CD8-positive, alpha-beta T cell (primary cell): ENCODE measurements at regions of chr2 and their contacts with region 1.

Region 1: DNA sequence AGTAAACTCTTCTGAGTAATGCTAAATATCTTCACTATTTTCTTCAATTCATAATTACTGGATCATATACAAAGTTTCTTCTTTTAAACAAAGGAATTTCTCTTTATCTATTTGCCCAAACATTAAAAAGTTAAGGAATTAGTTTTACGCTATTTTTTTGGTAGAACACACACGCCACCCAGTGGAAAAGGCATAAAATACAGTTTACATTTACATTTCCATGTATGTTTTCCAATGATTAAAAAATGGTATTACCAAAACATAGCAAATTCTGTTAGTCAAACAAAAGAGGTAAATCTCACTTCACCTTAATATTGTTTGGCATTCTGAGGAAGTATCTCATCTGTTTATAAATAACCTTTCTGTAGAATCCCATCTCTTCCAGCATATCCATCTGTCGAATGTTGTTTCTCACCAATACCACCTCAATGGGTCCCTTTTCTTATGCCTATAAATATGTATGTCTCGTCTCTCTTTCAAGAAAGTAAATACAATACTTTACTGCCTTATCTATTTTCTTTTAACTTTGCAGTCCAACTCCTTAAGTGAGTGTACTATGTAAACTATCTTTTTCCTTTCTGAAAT is 7.2 kb downstream of the BOLL start:
- DNase-seq: peak in 3 of 9 experiments; percentile 38 to 58 (median 48)
- ATAC-seq: no peak
- H3K4me3 ChIP-seq: no peak overlapping the region
- H3K4me3 Mint-ChIP-seq: no peak overlapping the region
- H3K27ac ChIP-seq: no peak overlapping the region
- H3K27ac Mint-ChIP-seq: no peak overlapping the region
- H3K4me1 ChIP-seq: no peaks in the 10 kb centered on the region
- H3K4me1 Mint-ChIP-seq: no peaks in the 10 kb centered on the region
- H3K27me3 ChIP-seq: no peaks in the 10 kb centered on the region
- H3K27me3 Mint-ChIP-seq: no peaks in the 10 kb centered on the region
- CTCF ChIP-seq: peak; percentile 97

Region 2: DNA sequence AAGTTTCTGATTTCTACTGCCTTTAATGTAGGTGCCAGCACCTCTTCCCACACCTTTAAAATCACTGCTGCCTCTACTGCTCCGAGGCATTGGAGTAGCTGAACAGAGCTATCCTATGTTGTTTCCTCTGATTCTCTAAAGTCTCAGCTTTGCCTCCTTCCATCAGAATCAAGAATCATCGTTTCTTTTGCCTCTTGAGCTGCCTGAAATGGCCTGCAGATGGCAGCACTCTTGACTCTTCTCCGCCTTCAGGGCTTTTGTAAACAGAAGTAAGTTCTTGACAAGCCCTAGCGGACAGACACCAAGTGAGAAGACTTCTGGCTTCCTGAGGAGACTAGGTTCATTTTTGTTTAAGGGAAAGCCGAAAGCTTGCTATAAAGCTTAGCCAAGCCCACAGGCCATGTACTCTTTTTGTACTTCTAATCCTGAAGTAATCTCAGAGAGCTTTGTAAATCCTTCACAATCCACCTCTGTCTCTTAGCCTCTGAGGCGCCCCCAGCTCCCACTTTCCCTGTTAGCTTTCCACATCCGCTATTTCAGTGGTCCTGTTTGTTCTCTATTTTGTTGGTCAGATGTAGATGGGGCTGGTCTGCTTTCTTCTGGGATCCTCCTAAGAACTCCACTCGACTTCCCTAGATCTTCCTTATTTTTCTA is 1026.8 kb before region 1 on chr2:
- CTCF ChIA-PET with region 1: no interaction called
- POLR2A ChIA-PET with region 1: no interaction called
- intact Hi-C with region 1: loop called in 1 of 2 experiments (anchors 2 kb)
- DNase-seq: peak; percentile 30 to 73 (median 54)
- ATAC-seq: peak; percentile 93
- H3K4me3 ChIP-seq: no peak overlapping the region
- H3K4me3 Mint-ChIP-seq: no peak overlapping the region
- H3K27ac ChIP-seq: no peak overlapping the region
- H3K27ac Mint-ChIP-seq: peak overlapping the region; percentile 14
- H3K4me1 ChIP-seq: peaks cover 3% of the 10 kb centered on the region
- H3K4me1 Mint-ChIP-seq: peaks cover 11% of the 10 kb centered on the region
- H3K27me3 ChIP-seq: no peaks in the 10 kb centered on the region
- H3K27me3 Mint-ChIP-seq: no peaks in the 10 kb centered on the region
- CTCF ChIP-seq: peak; percentile 67

Region 3: GRCh38 chr2:197097578-197098366 is 680.1 kb before region 1 on chr2:
- CTCF ChIA-PET with region 1: no interaction called
- POLR2A ChIA-PET with region 1: no interaction called
- intact Hi-C with region 1: loop called in 1 of 2 experiments (anchors 5 kb)
- DNase-seq: no peak
- ATAC-seq: no peak
- H3K4me3 ChIP-seq: no peak overlapping the region
- H3K4me3 Mint-ChIP-seq: no peak overlapping the region
- H3K27ac ChIP-seq: no peak overlapping the region
- H3K27ac Mint-ChIP-seq: peak overlapping the region; percentile 73
- H3K4me1 ChIP-seq: no peaks in the 10 kb centered on the region
- H3K4me1 Mint-ChIP-seq: peaks cover 32% of the 10 kb centered on the region
- H3K27me3 ChIP-seq: no peaks in the 10 kb centered on the region
- H3K27me3 Mint-ChIP-seq: no peaks in the 10 kb centered on the region
- CTCF ChIP-seq: no peak

Region 4: DNA sequence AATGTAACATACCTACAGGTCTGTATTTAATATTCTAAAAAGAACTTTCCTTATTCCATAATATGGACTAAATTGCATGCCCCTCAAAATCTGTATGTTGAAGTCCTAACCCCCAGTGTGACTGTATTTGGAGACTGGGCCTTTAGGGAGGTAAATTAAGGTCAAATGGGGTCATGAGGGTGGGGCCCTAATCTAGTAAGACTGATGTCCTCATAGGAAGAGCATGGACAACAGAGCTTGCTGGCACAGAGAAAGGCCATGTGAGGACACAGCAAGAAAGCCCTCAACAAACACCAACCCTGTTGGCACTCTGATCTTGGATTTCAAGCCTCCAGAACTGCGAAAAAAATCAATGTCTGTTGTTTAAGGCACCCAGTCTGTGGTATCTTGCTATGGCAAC is 361.6 kb before region 1 on chr2:
- CTCF ChIA-PET with region 1: no interaction called
- POLR2A ChIA-PET with region 1: no interaction called
- intact Hi-C with region 1: loop called in 1 of 2 experiments (anchors 5 kb)
- DNase-seq: no peak
- ATAC-seq: no peak
- H3K4me3 ChIP-seq: no peak overlapping the region
- H3K4me3 Mint-ChIP-seq: no peak overlapping the region
- H3K27ac ChIP-seq: no peak overlapping the region
- H3K27ac Mint-ChIP-seq: no peak overlapping the region
- H3K4me1 ChIP-seq: no peaks in the 10 kb centered on the region
- H3K4me1 Mint-ChIP-seq: peaks cover 21% of the 10 kb centered on the region
- H3K27me3 ChIP-seq: no peaks in the 10 kb centered on the region
- H3K27me3 Mint-ChIP-seq: no peaks in the 10 kb centered on the region
- CTCF ChIP-seq: no peak

Region 5: DNA sequence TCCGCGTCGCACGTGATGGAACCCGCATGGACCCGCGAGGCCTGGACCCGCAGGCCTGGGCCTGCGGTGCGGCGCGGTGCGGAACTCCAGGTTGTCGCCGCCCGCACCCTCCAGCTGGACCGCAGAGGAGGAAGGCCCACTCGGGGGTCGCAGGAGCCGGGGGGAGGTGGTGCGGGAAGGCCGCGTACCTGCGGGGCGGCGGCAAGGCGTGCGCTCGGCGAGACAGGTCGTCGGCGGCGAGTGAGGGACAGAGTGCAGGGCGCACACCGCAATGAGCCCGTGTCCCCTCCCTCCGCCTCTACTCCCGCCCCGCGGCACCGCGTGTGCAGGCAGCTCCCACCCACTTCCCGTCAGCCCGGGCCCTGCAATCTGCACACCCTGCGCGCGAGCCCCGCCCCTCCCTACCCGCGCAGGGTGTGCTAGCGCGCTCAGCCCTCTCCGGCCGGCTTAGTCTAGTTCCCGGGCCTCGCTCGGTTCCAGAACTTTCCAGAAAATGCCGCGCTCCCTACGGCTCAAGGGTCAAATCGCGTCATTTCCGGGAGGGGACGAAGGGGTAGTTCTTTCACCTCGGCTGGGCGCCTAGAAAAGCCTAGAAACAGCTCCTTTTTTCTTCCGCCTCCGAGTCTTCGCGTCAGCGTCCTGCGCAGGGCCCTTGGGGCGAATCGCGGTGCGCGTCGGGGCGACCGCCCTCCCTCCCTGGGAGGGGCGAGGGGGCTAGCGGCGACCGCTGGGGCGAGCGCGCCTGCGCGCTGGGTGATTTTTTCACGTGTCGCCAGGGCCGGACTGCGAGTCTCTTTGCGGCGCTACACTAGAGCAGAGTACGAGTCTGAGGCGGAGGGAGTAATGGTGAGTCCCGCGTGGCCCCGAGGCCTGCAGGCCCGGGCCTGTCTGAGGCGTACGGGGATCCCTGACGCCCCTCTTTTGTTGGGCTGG is 278.1 kb before region 1 on chr2 and contains the starts of genes HSPD1 and HSPE1:
- CTCF ChIA-PET with region 1: interaction called, 3 read pairs
- POLR2A ChIA-PET with region 1: no interaction called
- intact Hi-C with region 1: loop called in 1 of 2 experiments (anchors 5 kb)
- DNase-seq: peak; percentile 93 to 99 (median 97)
- ATAC-seq: peak; percentile 86
- H3K4me3 ChIP-seq: peak within 1 kb of the TSS; percentile 61 to 76
- H3K4me3 Mint-ChIP-seq: peak within 1 kb of the TSS; percentile 92
- H3K27ac ChIP-seq: peak within 1 kb of the TSS; percentile 96
- H3K27ac Mint-ChIP-seq: peak within 1 kb of the TSS; percentile 97
- H3K4me1 ChIP-seq: peaks cover 55% of the 10 kb centered on the region
- H3K4me1 Mint-ChIP-seq: peaks cover 62% of the 10 kb centered on the region
- H3K27me3 ChIP-seq: no peaks in the 10 kb centered on the region
- H3K27me3 Mint-ChIP-seq: no peaks in the 10 kb centered on the region
- CTCF ChIP-seq: no peak
- total RNA-seq, gene HSPD1: 162 to 163 TPM
- total RNA-seq, gene HSPE1: 76.7 to 76.8 TPM

Region 6: GRCh38 chr2:197760293-197760657 is 17.6 kb before region 1 on chr2:
- CTCF ChIA-PET with region 1: no interaction called
- POLR2A ChIA-PET with region 1: no interaction called
- intact Hi-C with region 1: no loop called
- DNase-seq: no peak
- ATAC-seq: no peak
- H3K4me3 ChIP-seq: no peak overlapping the region
- H3K4me3 Mint-ChIP-seq: no peak overlapping the region
- H3K27ac ChIP-seq: no peak overlapping the region
- H3K27ac Mint-ChIP-seq: no peak overlapping the region
- H3K4me1 ChIP-seq: no peaks in the 10 kb centered on the region
- H3K4me1 Mint-ChIP-seq: no peaks in the 10 kb centered on the region
- H3K27me3 ChIP-seq: no peaks in the 10 kb centered on the region
- H3K27me3 Mint-ChIP-seq: peaks cover 9% of the 10 kb centered on the region
- CTCF ChIP-seq: no peak

Region 7: DNA sequence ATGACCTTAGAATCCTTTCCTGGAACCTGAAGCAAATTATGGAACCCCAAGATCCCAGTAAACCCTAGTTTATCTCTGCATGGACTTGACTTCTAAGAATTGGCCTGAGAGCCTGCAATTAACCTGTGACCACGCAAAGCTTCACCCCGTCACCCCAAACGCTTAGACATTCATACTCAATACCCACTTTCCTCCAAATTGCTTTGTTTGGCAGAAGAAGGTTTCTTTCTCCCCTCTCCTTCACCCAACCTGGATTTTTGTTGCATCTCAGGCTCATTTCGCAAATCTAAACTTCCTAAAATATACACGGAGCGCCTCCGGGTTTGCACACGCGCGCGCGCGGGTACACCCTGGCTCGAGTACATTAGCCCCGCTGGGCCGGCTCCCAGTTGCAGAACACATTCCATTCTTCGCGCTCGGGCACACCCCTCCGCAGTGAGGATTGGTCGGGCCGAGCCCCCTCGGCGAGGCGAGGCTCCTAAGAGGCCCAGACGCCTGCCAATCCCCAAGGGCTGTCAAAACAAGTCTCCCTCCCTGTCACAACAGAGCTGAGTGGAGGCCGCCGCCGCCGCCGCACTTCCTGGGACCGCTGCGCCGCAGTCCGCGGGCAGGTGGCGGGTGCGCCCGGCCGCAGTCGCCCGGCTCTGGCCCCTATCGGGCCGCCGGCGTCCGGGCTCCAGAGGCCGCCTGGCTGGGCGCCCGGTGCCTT is 26.3 kb after region 1 on chr2 and contains the start of gene PLCL1:
- CTCF ChIA-PET with region 1: no interaction called
- POLR2A ChIA-PET with region 1: no interaction called
- intact Hi-C with region 1: no loop called
- DNase-seq: peak; percentile 77 to 94 (median 88)
- ATAC-seq: peak; percentile 98
- H3K4me3 ChIP-seq: peak within 1 kb of the TSS; percentile 67 to 70
- H3K4me3 Mint-ChIP-seq: peak within 1 kb of the TSS; percentile 92
- H3K27ac ChIP-seq: peak within 1 kb of the TSS in 1 of 2 experiments; percentile 53
- H3K27ac Mint-ChIP-seq: peak within 1 kb of the TSS; percentile 89
- H3K4me1 ChIP-seq: peaks cover 44% of the 10 kb centered on the region
- H3K4me1 Mint-ChIP-seq: peaks cover 44% of the 10 kb centered on the region
- H3K27me3 ChIP-seq: no peaks in the 10 kb centered on the region
- H3K27me3 Mint-ChIP-seq: no peaks in the 10 kb centered on the region
- CTCF ChIP-seq: no peak
- total RNA-seq, gene PLCL1: 8.2 to 8.3 TPM

Region 8: GRCh38 chr2:197893403-197894177 is 115.7 kb after region 1 on chr2:
- CTCF ChIA-PET with region 1: no interaction called
- POLR2A ChIA-PET with region 1: no interaction called
- intact Hi-C with region 1: no loop called
- DNase-seq: no peak
- ATAC-seq: no peak
- H3K4me3 ChIP-seq: no peak overlapping the region
- H3K4me3 Mint-ChIP-seq: peak overlapping the region; percentile 9
- H3K27ac ChIP-seq: no peak overlapping the region
- H3K27ac Mint-ChIP-seq: peak overlapping the region; percentile 12
- H3K4me1 ChIP-seq: peaks cover 21% of the 10 kb centered on the region
- H3K4me1 Mint-ChIP-seq: peaks cover 44% of the 10 kb centered on the region
- H3K27me3 ChIP-seq: no peaks in the 10 kb centered on the region
- H3K27me3 Mint-ChIP-seq: no peaks in the 10 kb centered on the region
- CTCF ChIP-seq: no peak